PC-9 (cell line): ENCODE measurements at regions of chr14 and their contacts with region 1.

Region 1: DNA sequence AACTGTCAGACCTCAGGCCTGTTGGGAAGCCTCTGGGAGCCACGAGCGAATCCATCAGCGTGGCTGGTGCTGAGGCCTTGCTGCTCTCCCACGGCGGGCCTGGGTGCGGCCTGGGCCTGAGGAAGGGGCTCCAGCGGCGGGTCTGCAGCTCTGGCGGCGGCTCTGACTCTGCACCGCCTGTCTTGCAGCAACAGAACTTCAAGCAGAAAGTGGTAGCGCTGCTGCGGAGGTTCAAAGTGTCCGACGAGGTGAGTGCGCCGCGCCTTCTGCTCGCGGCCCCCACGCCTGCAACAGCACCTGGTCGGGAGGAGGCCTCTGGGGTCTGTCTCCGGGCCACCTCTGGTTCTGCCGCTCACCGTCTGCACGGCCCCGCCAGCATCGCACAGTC is 28.7 kb upstream of the TEX22 start:
- DNase-seq: no peak
- H3K4me3 ChIP-seq: no peak overlapping the region
- H3K27ac ChIP-seq: no peak overlapping the region
- H3K4me1 ChIP-seq: no peaks in the 10 kb centered on the region
- H3K27me3 ChIP-seq: no peaks in the 10 kb centered on the region
- CTCF ChIP-seq: no peak

Region 2: GRCh38 chr14:105138021-105138541 is 231.6 kb before region 1 on chr14:
- CTCF ChIA-PET with region 1: no interaction called
- POLR2A ChIA-PET with region 1: no interaction called
- intact Hi-C with region 1: no loop called
- DNase-seq: no peak
- H3K4me3 ChIP-seq: no peak overlapping the region
- H3K27ac ChIP-seq: no peak overlapping the region
- H3K4me1 ChIP-seq: no peaks in the 10 kb centered on the region
- H3K27me3 ChIP-seq: no peaks in the 10 kb centered on the region
- CTCF ChIP-seq: no peak

Region 3: DNA sequence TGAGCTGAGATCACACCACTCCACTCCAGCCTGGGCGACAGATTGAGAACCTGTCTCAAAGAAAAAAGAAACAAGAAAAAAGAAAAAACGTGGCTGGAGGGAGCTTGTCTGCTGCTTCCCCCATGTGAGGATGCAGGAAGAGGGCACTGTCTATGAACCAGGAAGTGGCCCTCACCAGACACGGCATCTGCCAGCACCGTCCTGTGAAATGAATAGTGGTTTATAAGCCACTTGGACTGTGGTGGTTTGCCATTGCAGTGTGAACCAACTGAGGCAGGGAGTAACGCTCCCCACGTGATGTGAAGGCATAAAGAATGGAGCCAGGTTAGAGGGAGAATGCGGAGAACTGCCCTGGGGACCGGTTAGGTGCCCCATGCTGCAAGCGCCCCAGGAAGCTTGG is 64.3 kb before region 1 on chr14:
- CTCF ChIA-PET with region 1: no interaction called
- POLR2A ChIA-PET with region 1: no interaction called
- intact Hi-C with region 1: no loop called
- DNase-seq: no peak
- H3K4me3 ChIP-seq: no peak overlapping the region
- H3K27ac ChIP-seq: no peak overlapping the region
- H3K4me1 ChIP-seq: no peaks in the 10 kb centered on the region
- H3K27me3 ChIP-seq: no peaks in the 10 kb centered on the region
- CTCF ChIP-seq: no peak

Region 4: GRCh38 chr14:105527661-105528581 is 158.3 kb after region 1 on chr14:
- CTCF ChIA-PET with region 1: interaction called, 3 read pairs
- POLR2A ChIA-PET with region 1: no interaction called
- intact Hi-C with region 1: loop called (anchors 2 kb)
- DNase-seq: peak in 1 of 2 experiments; percentile 63
- H3K4me3 ChIP-seq: peak overlapping the region; percentile 58
- H3K27ac ChIP-seq: no peak overlapping the region
- H3K4me1 ChIP-seq: no peaks in the 10 kb centered on the region
- H3K27me3 ChIP-seq: peaks cover 22% of the 10 kb centered on the region
- CTCF ChIP-seq: peak; percentile 78

Region 5: DNA sequence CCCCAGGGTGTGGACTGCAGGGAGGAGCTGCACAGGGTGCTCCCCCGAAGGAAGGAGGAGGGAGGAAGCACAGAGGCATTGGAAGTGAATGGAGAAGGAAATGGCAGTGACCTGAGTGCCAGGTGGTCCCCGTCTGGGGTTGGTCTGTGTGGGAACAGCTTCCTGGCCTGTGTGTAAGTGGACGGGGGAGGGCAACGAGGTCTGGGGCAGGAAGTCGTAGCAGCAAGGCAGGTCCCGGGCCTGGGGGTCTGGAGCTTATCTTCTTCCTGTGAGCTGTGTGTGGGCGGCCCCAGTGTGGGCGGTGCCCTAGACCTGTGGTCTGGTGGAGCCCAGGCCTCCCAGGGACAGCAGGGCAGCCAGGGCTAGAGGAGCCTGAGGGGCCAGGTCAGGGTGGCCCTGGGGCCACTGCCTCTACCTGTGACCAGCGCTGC is 538.8 kb after region 1 on chr14:
- CTCF ChIA-PET with region 1: no interaction called
- POLR2A ChIA-PET with region 1: no interaction called
- intact Hi-C with region 1: no loop called
- DNase-seq: no peak
- H3K4me3 ChIP-seq: no peak overlapping the region
- H3K27ac ChIP-seq: no peak overlapping the region
- H3K4me1 ChIP-seq: no peaks in the 10 kb centered on the region
- H3K27me3 ChIP-seq: peaks cover 23% of the 10 kb centered on the region
- CTCF ChIP-seq: no peak